Lower lobe of right lung (tissue), 2 donors: ENCODE measurements at regions of chr14 and their contacts with region 1.

Region 1: DNA sequence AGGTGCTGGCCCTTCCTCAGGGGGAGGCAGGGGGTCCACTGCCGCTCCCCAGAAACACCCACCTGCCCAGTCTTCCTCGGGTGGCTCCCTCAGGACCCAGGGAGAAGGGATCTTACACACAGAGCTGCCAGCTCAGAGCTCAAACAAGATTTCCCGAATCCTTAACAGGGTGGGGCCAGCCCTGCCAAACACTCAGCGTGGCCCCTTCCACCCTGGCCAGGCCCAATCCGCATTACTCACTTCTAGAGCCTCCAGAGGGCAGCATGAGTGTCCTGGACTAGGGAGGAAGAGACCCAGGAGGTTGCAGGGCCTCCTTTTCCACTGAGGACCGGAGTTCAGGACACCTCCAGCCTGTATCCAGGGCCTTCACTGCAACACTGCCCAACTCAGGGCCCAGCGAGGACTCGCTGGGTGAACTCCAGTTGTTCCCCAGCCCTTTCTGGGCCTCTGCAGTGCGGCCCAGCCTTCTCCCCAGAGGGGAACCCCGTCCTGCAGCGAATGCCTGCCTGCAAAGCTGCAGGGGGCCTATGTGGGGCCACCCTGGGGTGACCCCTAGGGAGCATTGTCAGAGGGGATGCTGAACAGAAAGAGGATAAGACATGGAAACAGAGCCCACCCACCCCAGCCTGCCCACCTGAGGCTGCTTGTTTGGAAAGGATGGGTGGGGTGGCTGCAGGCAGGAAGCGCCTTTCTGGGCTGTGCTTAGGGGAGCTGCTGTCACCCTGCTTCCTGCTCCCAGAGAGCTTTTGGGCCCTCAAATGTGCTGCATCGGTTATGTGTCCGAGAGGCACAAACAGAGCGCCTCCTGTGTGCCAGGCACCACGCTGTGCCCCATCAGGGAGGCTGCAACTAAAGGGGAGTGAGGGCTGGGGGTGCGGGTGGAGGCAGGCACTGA is 43.8 kb downstream of the CCNK start:
- DNase-seq: no peak
- ATAC-seq: peak; percentile 56 to 72
- H3K4me3 ChIP-seq: no peak overlapping the region
- H3K27ac ChIP-seq: no peak overlapping the region
- H3K4me1 ChIP-seq: peaks cover 34% of the 10 kb centered on the region
- H3K27me3 ChIP-seq: no peaks in the 10 kb centered on the region
- CTCF ChIP-seq: peak; percentile 35

Region 2: GRCh38 chr14:99628832-99629618 is 104.0 kb after region 1 on chr14:
- intact Hi-C with region 1: loop called (anchors 10 kb)
- DNase-seq: peak; percentile 85
- ATAC-seq: peak; percentile 91 to 94
- H3K4me3 ChIP-seq: no peak overlapping the region
- H3K27ac ChIP-seq: no peak overlapping the region
- H3K4me1 ChIP-seq: no peaks in the 10 kb centered on the region
- H3K27me3 ChIP-seq: peaks cover 6% of the 10 kb centered on the region
- CTCF ChIP-seq: peak; percentile 99